RWPE1 (cell line): ENCODE measurements at regions of chr14 and their contacts with region 1.

Region 1: DNA sequence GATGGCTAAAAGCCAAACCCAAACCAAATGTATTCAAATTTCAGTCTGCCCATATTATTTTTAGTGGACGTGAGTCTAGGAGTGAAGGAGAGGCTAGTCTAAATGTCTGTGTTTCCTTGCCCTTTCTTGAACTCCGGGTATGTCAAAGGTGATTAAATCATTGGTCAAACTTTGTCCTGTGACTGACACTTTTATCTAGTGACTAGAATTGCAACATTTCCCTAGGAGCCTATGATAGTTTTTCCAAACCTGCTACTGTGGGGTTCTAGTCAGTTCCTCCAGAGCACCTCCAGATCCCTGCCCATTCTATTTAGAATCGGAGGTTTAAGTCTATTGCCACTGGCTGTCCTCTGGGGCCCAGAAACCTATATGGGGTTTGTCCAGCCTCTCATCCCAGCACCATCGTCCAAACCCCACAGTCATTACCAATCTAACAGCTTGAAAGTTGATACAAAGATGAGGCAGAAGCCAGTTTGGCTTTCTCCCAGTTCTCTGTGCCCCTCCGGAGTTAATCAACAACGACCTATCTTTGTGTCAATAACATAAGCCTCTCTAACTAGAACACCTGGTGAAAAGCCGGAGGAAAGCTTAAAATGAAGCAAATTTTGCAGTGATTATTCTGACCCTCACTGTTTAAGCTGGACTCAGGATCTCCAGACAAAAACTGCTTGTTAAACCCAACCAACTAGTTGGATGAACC is 306.7 kb downstream of the ZFP36L1 start:
- DNase-seq: no peak
- H3K27ac ChIP-seq: no peak overlapping the region
- CTCF ChIP-seq: no peak

Region 2: DNA sequence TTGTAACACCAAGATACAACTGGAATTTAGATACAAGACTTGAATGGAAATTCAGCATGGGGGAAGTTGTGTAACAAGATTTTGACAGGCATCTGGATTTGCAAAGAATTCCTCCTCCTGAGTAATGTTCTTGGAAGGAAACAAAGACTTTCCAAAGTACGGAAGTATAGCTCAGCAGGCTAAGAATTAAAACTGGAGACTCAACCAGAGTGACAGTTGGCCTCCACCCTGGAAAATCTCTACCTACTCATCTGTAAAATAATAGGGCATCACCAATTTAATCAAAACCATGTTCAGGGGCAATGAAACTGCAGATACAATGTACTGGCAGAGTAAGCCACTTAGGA is 652.0 kb after region 1 on chr14:
- CTCF ChIA-PET with region 1: interaction called, 10 read pairs
- POLR2A ChIA-PET with region 1: no interaction called
- DNase-seq: peak; percentile 34
- H3K27ac ChIP-seq: no peak overlapping the region
- CTCF ChIP-seq: no peak